Gastrocnemius medialis (tissue), 4 donors: ENCODE measurements at regions of chr6 and their contacts with region 1.

Region 1: GRCh38 chr6:15245361-15246216 is at the start of gene JARID2:
- DNase-seq: peak; percentile 99
- ATAC-seq: peak; percentile 79 to 81
- H3K4me3 ChIP-seq: peak within 1 kb of the TSS; percentile 64 to 81 (median 77)
- H3K27ac ChIP-seq: peak within 1 kb of the TSS; percentile 90 to 98 (median 97)
- H3K4me1 ChIP-seq: peaks cover 11 to 27% of the 10 kb centered on the region in 2 donors
- H3K27me3 ChIP-seq: no peaks in the 10 kb centered on the region
- CTCF ChIP-seq: peak in 3 of 5 experiments; percentile 12 to 33 (median 23)
- POLR2A ChIP-seq: peak; percentile 95 to 98
- total RNA-seq, gene JARID2: 11.6 to 22.5 (median 16.4) TPM

Region 2: DNA sequence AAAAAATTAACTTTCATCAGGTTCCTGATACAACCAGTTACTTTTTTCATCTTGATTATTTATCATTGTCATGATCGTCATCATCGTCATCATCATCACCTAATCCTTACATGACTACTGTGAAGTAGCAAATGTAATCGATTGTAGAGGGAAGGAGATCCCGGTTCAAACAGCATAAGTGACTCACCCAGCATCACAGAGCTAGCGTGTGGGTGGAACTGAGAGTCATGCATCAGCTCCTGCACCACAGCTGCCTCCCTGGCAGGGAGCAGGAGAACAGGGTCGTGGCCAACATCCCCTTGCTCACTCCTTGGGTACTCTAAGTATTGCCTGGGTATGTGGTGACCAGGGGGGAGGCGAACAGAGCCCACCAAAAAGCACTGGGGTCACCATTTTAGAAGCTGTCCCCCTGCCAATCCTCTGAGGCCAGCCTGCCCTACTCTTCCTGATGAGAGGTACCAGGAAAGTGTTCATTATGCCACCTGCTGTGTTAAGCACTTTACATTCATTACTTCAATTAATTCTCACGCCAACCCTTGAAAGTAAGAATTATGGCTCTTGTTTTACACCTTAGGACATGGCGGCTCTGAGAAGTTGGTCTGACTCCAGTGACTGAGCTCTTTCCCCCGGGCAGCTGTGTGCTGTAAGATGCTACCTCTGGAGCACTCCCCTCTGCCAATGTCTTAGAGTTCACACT is 702.8 kb before region 1 on chr6:
- in situ Hi-C with region 1: no loop called
- intact Hi-C with region 1: loop called (anchors 10 kb)
- DNase-seq: no peak
- ATAC-seq: no peak
- H3K4me3 ChIP-seq: no peak overlapping the region
- H3K27ac ChIP-seq: no peak overlapping the region
- H3K4me1 ChIP-seq: peaks cover 26 to 37% of the 10 kb centered on the region in 2 donors
- H3K27me3 ChIP-seq: no peaks in the 10 kb centered on the region
- CTCF ChIP-seq: no peak
- POLR2A ChIP-seq: no peak

Region 3: GRCh38 chr6:14889191-14889590 is 356.4 kb before region 1 on chr6:
- in situ Hi-C with region 1: loop called in 1 of 4 experiments (anchors 10 kb)
- intact Hi-C with region 1: loop called (anchors 1 kb)
- DNase-seq: no peak
- ATAC-seq: peak in 1 of 2 donors; percentile 50
- H3K4me3 ChIP-seq: no peak overlapping the region
- H3K27ac ChIP-seq: peak overlapping the region; percentile 84 to 89 (median 86)
- H3K4me1 ChIP-seq: peaks cover 21 to 33% of the 10 kb centered on the region in 2 donors
- H3K27me3 ChIP-seq: no peaks in the 10 kb centered on the region
- CTCF ChIP-seq: peak in 1 of 5 experiments; percentile 3
- POLR2A ChIP-seq: no peak

Region 4: DNA sequence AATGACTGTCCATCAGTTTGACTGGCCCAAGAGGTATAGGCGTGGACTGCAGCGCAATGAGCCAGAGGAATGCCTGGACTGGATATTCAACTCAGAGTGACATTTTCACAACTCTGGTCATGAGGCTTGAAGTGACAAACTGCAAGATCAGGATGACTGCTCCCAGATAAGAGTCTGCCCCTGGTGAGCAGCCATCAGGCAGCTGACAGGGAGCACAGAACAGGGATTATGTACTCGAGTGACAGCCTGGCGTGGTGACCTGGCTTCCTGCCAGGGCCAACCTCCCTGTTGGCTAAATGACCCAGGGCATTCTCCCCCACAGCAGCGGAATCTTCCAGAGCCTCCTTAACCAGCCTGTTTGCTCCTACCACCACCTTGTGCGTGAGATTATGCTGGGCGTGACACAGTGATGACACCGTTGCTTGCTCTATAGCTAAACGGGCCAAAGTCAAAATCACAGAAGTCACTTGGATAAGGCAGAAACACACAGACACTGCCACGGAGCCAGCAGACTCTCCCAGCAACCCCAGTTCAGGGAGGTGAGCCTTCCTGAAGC is 208.8 kb before region 1 on chr6:
- in situ Hi-C with region 1: no loop called
- intact Hi-C with region 1: loop called (anchors 10 kb)
- DNase-seq: peak; percentile 93 to 98
- ATAC-seq: peak; percentile 93 to 96
- H3K4me3 ChIP-seq: peak overlapping the region; percentile 33 to 48 (median 38)
- H3K27ac ChIP-seq: peak overlapping the region; percentile 85 to 91 (median 88)
- H3K4me1 ChIP-seq: peaks cover 7 to 27% of the 10 kb centered on the region in 2 donors
- H3K27me3 ChIP-seq: no peaks in the 10 kb centered on the region
- CTCF ChIP-seq: no peak
- POLR2A ChIP-seq: peak; percentile 33 to 63

Region 5: GRCh38 chr6:15148356-15148946 is 97.1 kb before region 1 on chr6:
- in situ Hi-C with region 1: no loop called
- intact Hi-C with region 1: no loop called
- DNase-seq: no peak
- ATAC-seq: no peak
- H3K4me3 ChIP-seq: no peak overlapping the region
- H3K27ac ChIP-seq: no peak overlapping the region
- H3K4me1 ChIP-seq: peaks cover 0 to 4% of the 10 kb centered on the region in 2 donors
- H3K27me3 ChIP-seq: no peaks in the 10 kb centered on the region
- CTCF ChIP-seq: no peak
- POLR2A ChIP-seq: no peak

Region 6: GRCh38 chr6:15194453-15194852 is 51.1 kb before region 1 on chr6:
- in situ Hi-C with region 1: no loop called
- intact Hi-C with region 1: no loop called
- DNase-seq: no peak
- ATAC-seq: no peak
- H3K4me3 ChIP-seq: no peak overlapping the region
- H3K27ac ChIP-seq: no peak overlapping the region
- H3K4me1 ChIP-seq: no peaks in the 10 kb centered on the region
- H3K27me3 ChIP-seq: no peaks in the 10 kb centered on the region
- CTCF ChIP-seq: no peak
- POLR2A ChIP-seq: no peak

Region 7: GRCh38 chr6:15207923-15208322 is 37.7 kb before region 1 on chr6:
- in situ Hi-C with region 1: no loop called
- intact Hi-C with region 1: no loop called
- DNase-seq: no peak
- ATAC-seq: no peak
- H3K4me3 ChIP-seq: no peak overlapping the region
- H3K27ac ChIP-seq: no peak overlapping the region
- H3K4me1 ChIP-seq: no peaks in the 10 kb centered on the region
- H3K27me3 ChIP-seq: no peaks in the 10 kb centered on the region
- CTCF ChIP-seq: no peak
- POLR2A ChIP-seq: no peak

Region 8: GRCh38 chr6:15429141-15430110 is 183.8 kb after region 1 on chr6:
- in situ Hi-C with region 1: loop called in 1 of 4 experiments (anchors 25 kb)
- intact Hi-C with region 1: loop called (anchors 5 kb)
- DNase-seq: no peak
- ATAC-seq: peak in 1 of 2 donors; percentile 11
- H3K4me3 ChIP-seq: no peak overlapping the region
- H3K27ac ChIP-seq: peak overlapping the region; percentile 83 to 90 (median 90)
- H3K4me1 ChIP-seq: peaks cover 69 to 77% of the 10 kb centered on the region in 2 donors
- H3K27me3 ChIP-seq: no peaks in the 10 kb centered on the region
- CTCF ChIP-seq: no peak
- POLR2A ChIP-seq: no peak

Region 9: GRCh38 chr6:15491255-15491985 is 245.8 kb after region 1 on chr6:
- in situ Hi-C with region 1: loop called in 2 of 4 experiments (anchors 5 to 25 kb)
- intact Hi-C with region 1: loop called (anchors 5 kb)
- DNase-seq: peak; percentile 59 to 77
- ATAC-seq: peak; percentile 42 to 56
- H3K4me3 ChIP-seq: no peak overlapping the region
- H3K27ac ChIP-seq: peak overlapping the region; percentile 55 to 73 (median 69)
- H3K4me1 ChIP-seq: peaks cover 38 to 45% of the 10 kb centered on the region in 2 donors
- H3K27me3 ChIP-seq: no peaks in the 10 kb centered on the region
- CTCF ChIP-seq: peak; percentile 86 to 94 (median 93)
- POLR2A ChIP-seq: no peak